Activated CD4-positive, alpha-beta T cell treated with anti-CD3 and anti-CD28 coated beads, Interleukin-2, amount 10 ng/mL, durations not matched to agents 24 days and 14 days (primary cell): ENCODE measurements at regions of chr11 and their contacts with region 1.

Region 1: DNA sequence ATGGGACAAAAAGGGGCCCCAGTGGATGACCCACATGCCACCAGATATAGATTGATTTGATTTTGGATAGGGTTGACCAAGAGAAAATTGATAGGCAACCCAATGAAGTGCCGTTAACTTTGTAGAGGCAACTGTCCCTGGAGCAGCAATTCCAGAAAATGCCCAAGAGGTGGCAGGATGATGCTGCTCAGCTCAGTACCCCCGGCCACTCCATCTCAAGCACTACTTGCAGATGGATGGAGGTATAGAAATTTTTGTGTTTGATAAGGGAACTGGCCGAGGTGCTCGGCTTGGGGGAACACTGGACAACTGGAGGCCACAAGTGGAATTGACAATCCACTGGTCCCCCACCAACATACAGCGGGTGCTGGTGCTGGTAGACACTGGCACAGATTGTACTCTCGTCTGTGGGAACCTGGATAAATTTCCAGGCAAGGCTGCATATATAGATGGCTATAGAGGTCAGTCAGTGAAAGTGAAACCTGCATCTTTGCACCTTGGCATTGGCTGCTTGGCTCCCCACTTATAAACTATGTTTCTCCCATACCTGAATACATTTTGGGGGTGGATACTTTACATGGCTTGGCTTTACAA is 86.3 kb downstream of the CCDC83 start:
- DNase-seq: peak; percentile 77
- H3K4me3 Mint-ChIP-seq: no peak overlapping the region
- H3K27ac Mint-ChIP-seq: no peak overlapping the region
- H3K4me1 Mint-ChIP-seq: peaks cover 13% of the 10 kb centered on the region
- H3K27me3 Mint-ChIP-seq: no peaks in the 10 kb centered on the region

Region 2: DNA sequence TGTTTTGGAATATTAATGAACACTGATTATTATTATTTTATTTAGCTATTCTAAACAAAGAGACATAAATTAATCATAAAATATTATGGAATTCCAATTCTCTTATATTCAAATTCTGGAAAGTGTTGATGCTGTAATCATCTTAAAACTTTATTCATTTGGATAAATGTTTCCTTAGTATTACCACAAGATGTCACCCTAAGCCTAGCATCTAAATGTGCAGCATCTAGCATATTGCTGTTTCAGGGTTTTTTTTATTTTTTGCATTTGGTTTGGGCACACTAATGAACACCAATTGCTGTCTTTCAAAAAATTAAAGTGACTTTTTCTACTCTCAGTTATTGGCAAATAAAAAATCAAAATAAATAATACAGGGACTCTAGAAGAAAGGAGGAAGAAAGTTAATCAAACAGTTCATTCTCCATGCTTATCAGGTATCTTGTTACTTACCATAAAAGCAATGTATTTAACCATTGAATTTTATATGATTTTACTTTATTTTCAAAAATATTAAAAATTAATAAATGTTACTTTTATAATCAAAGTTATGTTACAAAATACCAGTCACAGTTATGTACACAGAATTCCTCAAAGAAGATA is 346.1 kb before region 1 on chr11:
- intact Hi-C with region 1: loop called (anchors 10 kb)
- DNase-seq: peak; percentile 65
- H3K4me3 Mint-ChIP-seq: no peak overlapping the region
- H3K27ac Mint-ChIP-seq: no peak overlapping the region
- H3K4me1 Mint-ChIP-seq: no peaks in the 10 kb centered on the region
- H3K27me3 Mint-ChIP-seq: peaks cover 15% of the 10 kb centered on the region

Region 3: DNA sequence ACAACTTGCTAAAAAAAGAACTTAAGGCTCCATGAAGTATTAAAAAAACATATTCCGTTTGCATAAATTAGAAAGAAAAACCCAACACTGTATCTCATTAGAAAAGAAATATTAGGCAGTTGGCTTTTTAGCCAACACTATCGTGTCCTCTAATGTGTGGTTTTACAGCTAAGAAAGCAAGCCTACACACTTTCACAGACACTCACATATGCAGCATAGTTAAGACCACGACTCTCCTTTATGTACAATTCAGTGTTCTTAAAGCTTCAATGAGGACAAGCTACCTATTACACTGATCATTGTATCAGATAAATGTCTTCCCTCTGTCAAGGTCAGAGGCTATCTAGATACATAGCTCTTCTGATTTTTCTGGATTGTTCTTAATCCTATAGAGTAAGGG is 47.3 kb after region 1 on chr11:
- intact Hi-C with region 1: no loop called
- DNase-seq: no peak
- H3K4me3 Mint-ChIP-seq: no peak overlapping the region
- H3K27ac Mint-ChIP-seq: peak overlapping the region; percentile 51
- H3K4me1 Mint-ChIP-seq: peaks cover 16% of the 10 kb centered on the region
- H3K27me3 Mint-ChIP-seq: no peaks in the 10 kb centered on the region

Region 4: GRCh38 chr11:86418917-86419316 is 477.4 kb after region 1 on chr11:
- intact Hi-C with region 1: loop called (anchors 1 kb)
- DNase-seq: no peak
- H3K4me3 Mint-ChIP-seq: no peak overlapping the region
- H3K27ac Mint-ChIP-seq: no peak overlapping the region
- H3K4me1 Mint-ChIP-seq: peaks cover 9% of the 10 kb centered on the region
- H3K27me3 Mint-ChIP-seq: no peaks in the 10 kb centered on the region